ENCODE measurements at regions of chr22 and their contacts with region 1.

Region 1: GRCh38 chr22:22060200-22061084 is 77.9 kb upstream of the TOP3B start:
- DNase-seq: peak; percentile 39
- H3K4me3 ChIP-seq: no peak overlapping the region
- H3K27ac ChIP-seq: no peak overlapping the region
- H3K4me1 ChIP-seq: peaks cover 4% of the 10 kb centered on the region
- H3K27me3 ChIP-seq: no peaks in the 10 kb centered on the region
- CTCF ChIP-seq: peak; percentile 80 to 99

Region 2: DNA sequence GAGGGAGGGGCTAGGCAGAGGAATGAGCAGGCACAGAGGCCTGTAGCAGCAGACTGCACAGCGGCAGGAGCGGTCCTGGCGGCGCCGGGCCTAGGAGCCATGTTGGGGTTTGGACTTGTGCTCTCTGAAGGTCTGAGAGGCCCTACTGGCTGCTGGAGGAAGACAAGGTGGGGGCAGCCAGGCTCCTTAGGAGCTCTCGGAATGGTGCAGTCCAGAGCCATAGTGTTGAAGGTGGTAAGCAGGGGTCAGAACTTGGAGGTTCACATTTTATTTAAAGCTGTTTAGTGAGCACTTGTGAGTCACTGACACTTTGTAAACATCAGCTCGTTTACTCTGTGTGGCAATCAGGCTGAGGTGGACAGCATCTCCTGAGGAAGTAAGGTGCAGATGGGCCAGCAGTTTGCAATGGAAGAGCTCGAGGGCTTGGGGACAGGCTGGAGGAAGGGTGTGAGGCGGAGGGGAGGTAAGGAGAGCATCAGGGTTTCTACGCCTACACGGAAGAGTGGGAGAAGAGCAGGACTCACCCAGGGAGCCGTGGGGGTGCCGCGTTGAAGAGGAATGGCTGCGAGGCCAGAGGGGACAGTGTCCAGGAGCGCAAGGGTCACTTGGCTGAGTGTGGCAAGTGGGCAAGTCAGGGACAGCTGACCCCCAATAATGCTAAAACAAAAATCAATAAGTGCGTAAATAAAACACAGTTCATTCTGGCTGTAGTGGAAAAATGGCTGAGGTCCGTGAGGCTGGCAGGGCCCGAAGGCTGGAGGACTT is 603.2 kb before region 1 on chr22:
- CTCF ChIA-PET with region 1: no interaction called
- dilution Hi-C with region 1: no loop called
- in situ Hi-C with region 1: no loop called
- intact Hi-C with region 1: no loop called
- DNase-seq: no peak
- H3K4me3 ChIP-seq: no peak overlapping the region
- H3K27ac ChIP-seq: no peak overlapping the region
- H3K4me1 ChIP-seq: no peaks in the 10 kb centered on the region
- H3K27me3 ChIP-seq: no peaks in the 10 kb centered on the region
- CTCF ChIP-seq: no peak

Region 3: GRCh38 chr22:21917181-21917958 is 143.1 kb before region 1 on chr22:
- CTCF ChIA-PET with region 1: no interaction called
- dilution Hi-C with region 1: no loop called
- in situ Hi-C with region 1: no loop called
- intact Hi-C with region 1: no loop called
- DNase-seq: no peak
- H3K4me3 ChIP-seq: no peak overlapping the region
- H3K27ac ChIP-seq: no peak overlapping the region
- H3K4me1 ChIP-seq: no peaks in the 10 kb centered on the region
- H3K27me3 ChIP-seq: no peaks in the 10 kb centered on the region
- CTCF ChIP-seq: no peak

Region 4: DNA sequence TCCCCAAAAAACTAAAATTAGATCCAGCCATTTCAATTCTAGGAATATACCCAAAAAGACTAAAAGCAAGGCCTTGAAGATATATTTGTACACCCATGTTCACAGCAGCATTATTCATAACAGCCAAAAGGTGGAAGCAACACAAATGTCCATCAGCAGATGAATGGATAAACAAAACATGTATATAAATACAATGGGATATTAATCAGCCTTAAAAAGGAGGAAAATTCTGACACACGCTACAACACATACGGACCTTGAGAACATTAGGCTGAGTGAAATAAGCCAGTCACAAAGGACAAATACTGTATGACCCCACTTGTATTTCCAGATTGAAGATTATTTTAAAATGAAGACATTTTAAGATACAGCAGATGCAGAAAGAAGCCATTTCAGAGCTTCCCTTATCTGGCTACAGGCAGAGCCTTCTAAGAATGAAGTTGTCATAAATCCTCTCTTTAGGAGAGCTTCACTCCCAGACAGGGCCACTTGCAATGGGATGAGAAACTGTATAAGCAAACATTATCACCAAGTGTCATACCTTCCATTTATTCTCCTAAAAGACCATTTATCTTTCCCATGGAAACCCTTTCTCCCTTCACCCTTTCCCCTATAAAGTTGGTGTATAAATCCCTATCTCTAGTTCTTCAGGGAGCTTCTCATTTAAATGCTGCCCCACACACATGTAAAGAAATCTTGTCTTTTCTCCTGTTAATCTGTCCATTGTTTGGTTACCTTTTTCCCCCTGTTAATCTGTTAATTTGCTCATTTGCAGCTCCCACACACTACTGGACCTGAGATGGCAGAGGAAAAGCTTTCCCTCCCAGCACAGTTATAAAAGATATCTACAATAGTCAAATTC is 58.5 kb before region 1 on chr22:
- CTCF ChIA-PET with region 1: no interaction called
- dilution Hi-C with region 1: loop called (anchors 5 kb)
- in situ Hi-C with region 1: no loop called
- intact Hi-C with region 1: no loop called
- DNase-seq: no peak
- H3K4me3 ChIP-seq: no peak overlapping the region
- H3K27ac ChIP-seq: no peak overlapping the region
- H3K4me1 ChIP-seq: no peaks in the 10 kb centered on the region
- H3K27me3 ChIP-seq: no peaks in the 10 kb centered on the region
- CTCF ChIP-seq: no peak

Region 5: DNA sequence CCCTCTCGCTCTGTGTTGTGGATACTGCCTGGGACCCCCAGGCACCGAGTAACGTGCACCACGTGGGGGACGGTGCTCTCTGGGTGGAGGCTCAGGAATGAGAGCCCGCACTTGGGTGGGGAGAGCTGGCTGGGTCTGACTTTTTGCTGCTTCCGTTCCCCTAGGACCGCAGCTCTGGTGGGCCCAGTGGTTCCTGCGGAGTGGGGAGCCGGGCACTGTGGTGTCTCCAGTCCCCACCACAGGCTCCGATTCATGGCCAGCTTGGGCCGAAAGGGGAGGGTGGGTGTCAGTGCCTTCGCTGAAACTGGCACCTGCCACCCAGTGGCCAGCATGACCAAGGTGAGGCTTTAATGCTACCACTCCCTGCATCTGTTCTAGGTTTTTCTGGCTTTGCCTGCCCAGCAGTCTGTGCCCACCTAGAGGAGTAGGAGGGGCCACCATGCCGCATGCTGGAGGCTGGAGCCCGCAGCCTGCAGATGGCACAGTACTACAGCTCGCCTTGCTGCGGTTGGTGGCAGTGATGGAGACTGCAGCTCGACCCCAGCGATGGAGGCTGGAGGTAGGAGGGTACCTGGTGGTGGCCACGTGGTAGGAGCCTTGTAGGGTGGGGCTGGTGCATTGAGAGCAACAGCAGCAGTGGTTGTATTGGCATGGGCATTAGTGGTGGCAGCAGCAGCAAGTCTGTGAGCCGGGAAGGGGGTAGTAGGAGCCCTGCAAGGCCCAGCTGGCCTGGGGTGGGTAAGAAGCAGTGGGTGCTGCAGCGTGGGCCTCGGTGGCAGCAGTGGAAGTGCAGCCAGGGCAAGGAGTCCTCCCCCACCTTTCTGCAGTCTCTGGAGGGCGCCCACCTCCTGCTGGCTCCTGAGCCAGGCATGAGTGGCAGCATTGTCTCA is 65.4 kb after region 1 on chr22:
- CTCF ChIA-PET with region 1: no interaction called
- dilution Hi-C with region 1: no loop called
- in situ Hi-C with region 1: no loop called
- intact Hi-C with region 1: no loop called
- DNase-seq: no peak
- H3K4me3 ChIP-seq: no peak overlapping the region
- H3K27ac ChIP-seq: no peak overlapping the region
- H3K4me1 ChIP-seq: no peaks in the 10 kb centered on the region
- H3K27me3 ChIP-seq: no peaks in the 10 kb centered on the region
- CTCF ChIP-seq: no peak

Region 6: GRCh38 chr22:22156716-22157347 is 96.4 kb after region 1 on chr22:
- CTCF ChIA-PET with region 1: no interaction called
- dilution Hi-C with region 1: loop called (anchors 5 kb)
- in situ Hi-C with region 1: no loop called
- intact Hi-C with region 1: loop called (anchors 1 kb)
- DNase-seq: peak; percentile 43
- H3K4me3 ChIP-seq: no peak overlapping the region
- H3K27ac ChIP-seq: no peak overlapping the region
- H3K4me1 ChIP-seq: no peaks in the 10 kb centered on the region
- H3K27me3 ChIP-seq: no peaks in the 10 kb centered on the region
- CTCF ChIP-seq: peak; percentile 71 to 86

Region 7: DNA sequence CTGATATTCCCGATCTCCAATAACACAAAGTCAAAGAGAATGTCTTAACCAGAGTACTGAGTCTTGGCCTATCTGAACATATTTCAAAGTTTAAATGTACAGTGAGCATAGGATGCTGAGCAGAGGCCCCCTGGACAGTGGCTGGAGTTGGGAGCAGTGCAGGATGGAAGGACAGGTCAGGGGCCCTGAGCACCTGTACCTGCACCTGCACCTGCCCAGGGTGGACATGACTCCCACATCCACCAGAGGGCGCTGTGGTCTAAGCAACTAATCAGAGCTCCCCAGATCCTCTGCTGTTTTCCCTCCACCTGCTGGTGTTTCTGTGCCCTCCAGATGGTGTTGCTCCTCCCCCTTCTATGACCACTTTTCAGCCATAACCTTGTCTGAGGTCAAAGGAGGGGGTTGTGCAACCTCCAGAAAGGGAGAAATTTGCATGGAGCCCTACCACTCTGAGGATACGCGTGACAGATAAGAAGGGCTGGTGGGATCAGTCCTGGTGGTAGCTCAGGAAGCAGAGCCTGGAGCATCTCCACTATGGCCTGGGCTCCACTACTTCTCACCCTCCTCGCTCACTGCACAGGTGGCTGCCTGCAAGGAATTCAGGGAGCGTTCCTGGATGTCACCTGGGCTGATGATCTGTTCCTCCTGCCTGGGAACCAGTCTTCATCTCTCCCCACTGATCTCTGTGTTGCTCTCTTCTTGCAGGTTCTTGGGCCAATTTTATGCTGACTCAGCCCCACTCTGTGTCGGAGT is 135.0 kb after region 1 on chr22:
- CTCF ChIA-PET with region 1: no interaction called
- dilution Hi-C with region 1: no loop called
- in situ Hi-C with region 1: no loop called
- intact Hi-C with region 1: loop called (anchors 1 kb)
- DNase-seq: peak; percentile 66
- H3K4me3 ChIP-seq: no peak overlapping the region
- H3K27ac ChIP-seq: no peak overlapping the region
- H3K4me1 ChIP-seq: no peaks in the 10 kb centered on the region
- H3K27me3 ChIP-seq: no peaks in the 10 kb centered on the region
- CTCF ChIP-seq: peak; percentile 91 to 94

Measured in mammary epithelial cell (primary cell).